Activated CD4-positive, alpha-beta memory T cell treated with anti-CD3 and anti-CD28 coated beads, Interleukin-2, amount 10 ng/mL, durations not matched to agents 7 days and 5 days (primary cell): ENCODE measurements at regions of chr2 and their contacts with region 1.

Region 1: GRCh38 chr2:11129598-11130449 is 25.4 kb upstream of the SLC66A3 start:
- DNase-seq: peak; percentile 80
- H3K4me3 Mint-ChIP-seq: peak overlapping the region; percentile 62
- H3K27ac Mint-ChIP-seq: no peak overlapping the region
- H3K4me1 Mint-ChIP-seq: peaks cover 33% of the 10 kb centered on the region
- H3K27me3 Mint-ChIP-seq: peaks cover 16% of the 10 kb centered on the region

Region 2: DNA sequence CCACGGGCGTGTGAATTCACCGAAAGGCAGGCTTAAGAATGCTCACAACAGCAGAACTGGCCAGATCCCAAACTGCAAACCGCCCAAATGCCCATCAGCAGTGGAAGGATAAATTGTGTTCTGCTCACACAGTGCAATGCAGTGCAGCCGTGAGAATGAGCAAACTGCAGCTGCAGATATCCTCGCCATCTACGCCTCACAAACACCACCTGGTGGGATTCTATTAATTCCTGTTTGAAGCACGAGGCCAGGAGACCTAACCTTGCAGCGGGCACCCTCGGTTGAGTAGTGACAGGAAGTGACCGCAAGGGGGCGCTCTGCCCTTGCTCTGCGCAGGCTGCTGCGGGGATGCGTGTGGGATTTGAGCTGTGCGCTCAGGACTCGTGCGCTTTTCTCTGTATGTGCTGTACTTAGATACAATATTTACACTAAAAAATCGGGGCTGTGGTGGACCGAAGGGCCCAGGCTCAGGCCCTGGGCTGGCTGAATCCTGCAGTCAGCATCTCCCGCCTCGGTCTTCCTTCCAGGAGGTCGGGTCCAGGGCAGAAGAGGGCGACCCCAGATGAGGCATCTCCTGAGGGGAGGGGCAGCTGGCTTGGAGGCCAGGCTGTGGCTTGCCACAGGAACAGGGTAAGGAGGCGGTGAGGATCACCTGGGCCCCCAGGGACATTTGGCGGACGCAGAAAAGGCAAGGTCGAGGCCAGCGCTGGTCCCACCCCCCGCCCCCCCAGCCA is 297.5 kb before region 1 on chr2:
- CTCF ChIA-PET with region 1: interaction called, 72 read pairs
- POLR2A ChIA-PET with region 1: interaction called, 5 read pairs
- DNase-seq: peak; percentile 82
- H3K4me3 Mint-ChIP-seq: no peak overlapping the region
- H3K27ac Mint-ChIP-seq: no peak overlapping the region
- H3K4me1 Mint-ChIP-seq: peaks cover 4% of the 10 kb centered on the region
- H3K27me3 Mint-ChIP-seq: peaks cover 16% of the 10 kb centered on the region

Region 3: DNA sequence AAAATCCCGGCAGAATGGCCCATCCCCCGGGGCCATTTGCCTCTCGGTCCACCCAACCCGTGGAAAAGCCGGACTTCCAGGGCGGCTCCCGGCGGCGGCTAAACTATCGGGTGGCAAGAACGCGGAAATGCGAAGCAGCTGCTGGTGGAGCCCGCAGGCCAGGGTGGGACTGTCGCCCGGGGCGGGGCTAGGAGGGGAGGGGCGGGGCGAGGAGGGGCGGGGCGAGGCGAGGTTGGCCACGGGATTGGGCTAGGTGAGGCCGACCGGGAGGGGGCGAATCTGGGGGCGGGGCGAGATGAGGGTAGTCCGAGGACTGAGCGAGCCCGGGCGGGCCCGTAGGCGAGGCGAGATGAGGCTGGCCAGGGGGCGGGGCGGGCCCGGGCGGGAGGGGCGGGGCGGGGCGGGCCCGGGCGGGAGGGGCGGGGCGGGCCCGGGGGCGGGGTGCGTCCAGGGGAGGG is 25.1 kb after region 1 on chr2:
- CTCF ChIA-PET with region 1: interaction called, 12 read pairs
- POLR2A ChIA-PET with region 1: interaction called, 14 read pairs
- DNase-seq: peak; percentile 98
- H3K4me3 Mint-ChIP-seq: peak overlapping the region; percentile 74
- H3K27ac Mint-ChIP-seq: peak overlapping the region; percentile 80
- H3K4me1 Mint-ChIP-seq: peaks cover 21% of the 10 kb centered on the region
- H3K27me3 Mint-ChIP-seq: peaks cover 14% of the 10 kb centered on the region

Region 4: DNA sequence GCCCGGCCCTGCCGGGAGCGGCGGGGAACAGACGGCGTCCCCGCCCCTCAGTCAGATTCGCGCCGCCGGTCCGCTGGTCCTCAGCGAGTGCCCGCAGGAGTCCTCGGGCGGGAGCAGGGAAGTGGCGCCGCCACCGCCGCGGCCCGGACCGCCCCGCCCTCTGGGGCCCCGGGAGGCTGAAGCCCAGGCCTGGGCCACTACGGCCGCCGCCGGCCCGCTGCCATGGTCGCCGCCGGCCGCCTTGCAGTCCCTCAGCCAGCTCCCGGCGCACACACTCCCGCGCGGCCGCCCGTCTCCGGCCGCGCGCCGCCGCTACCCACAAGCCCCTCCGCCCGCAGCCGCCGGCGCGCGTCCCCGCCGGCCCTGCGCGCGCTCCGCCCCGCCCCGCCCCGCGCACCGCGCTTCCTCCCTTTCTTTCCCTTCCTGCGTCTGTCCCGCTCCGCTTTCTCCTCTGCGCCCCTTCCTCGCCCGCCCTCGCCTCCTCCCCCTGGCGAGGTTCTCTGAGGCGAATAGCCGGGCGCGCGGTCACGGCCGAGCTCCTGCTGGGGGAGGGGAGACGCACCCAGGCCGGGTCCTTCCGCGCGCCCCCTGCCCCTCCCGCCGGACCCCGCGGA is 214.6 kb after region 1 on chr2 and contains the start of gene ROCK2:
- CTCF ChIA-PET with region 1: interaction called, 9 read pairs
- POLR2A ChIA-PET with region 1: interaction called, 13 read pairs
- DNase-seq: peak; percentile 75
- H3K4me3 Mint-ChIP-seq: peak within 1 kb of the TSS; percentile 98
- H3K27ac Mint-ChIP-seq: peak within 1 kb of the TSS; percentile 87
- H3K4me1 Mint-ChIP-seq: peaks cover 26% of the 10 kb centered on the region
- H3K27me3 Mint-ChIP-seq: peaks cover 13% of the 10 kb centered on the region
- total RNA-seq, gene ROCK2: 21.3 to 22.6 TPM

Region 5: DNA sequence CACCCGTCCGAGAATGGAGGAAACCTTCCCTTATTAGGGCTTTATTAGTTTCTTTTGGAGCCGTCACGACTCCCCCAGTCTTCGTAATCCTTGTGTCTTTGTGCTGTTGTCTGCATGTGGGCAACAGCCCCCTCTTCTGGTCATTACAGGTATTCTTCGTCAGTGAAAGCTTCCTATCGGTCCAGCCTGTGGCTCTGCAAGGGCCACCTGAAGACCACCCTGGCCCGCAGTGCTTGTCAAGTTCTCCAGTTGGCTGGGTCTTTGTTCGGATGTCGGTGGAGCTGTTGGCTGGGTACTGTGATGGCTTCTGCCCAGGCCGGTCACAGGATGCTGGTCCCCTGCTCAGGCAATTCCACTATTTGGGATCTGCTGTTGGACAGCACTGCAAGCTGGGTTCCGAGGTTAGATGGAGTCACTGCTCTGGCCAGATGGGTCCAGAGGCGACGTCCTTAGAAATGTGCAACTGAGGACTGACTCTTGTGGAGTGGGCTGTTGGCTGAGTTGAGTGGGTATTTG is 317.0 kb after region 1 on chr2:
- CTCF ChIA-PET with region 1: interaction called, 26 read pairs
- POLR2A ChIA-PET with region 1: interaction called, 9 read pairs
- DNase-seq: peak; percentile 48
- H3K4me3 Mint-ChIP-seq: no peak overlapping the region
- H3K27ac Mint-ChIP-seq: no peak overlapping the region
- H3K4me1 Mint-ChIP-seq: no peaks in the 10 kb centered on the region
- H3K27me3 Mint-ChIP-seq: no peaks in the 10 kb centered on the region

Region 6: GRCh38 chr2:11583840-11584524 is 454.2 kb after region 1 on chr2:
- CTCF ChIA-PET with region 1: interaction called, 91 read pairs
- POLR2A ChIA-PET with region 1: interaction called, 4 read pairs
- DNase-seq: peak; percentile 68
- H3K4me3 Mint-ChIP-seq: no peak overlapping the region
- H3K27ac Mint-ChIP-seq: no peak overlapping the region
- H3K4me1 Mint-ChIP-seq: peaks cover 3% of the 10 kb centered on the region
- H3K27me3 Mint-ChIP-seq: peaks cover 3% of the 10 kb centered on the region